PC-9 (cell line): ENCODE measurements at regions of chr14 and their contacts with region 1.

Region 1: DNA sequence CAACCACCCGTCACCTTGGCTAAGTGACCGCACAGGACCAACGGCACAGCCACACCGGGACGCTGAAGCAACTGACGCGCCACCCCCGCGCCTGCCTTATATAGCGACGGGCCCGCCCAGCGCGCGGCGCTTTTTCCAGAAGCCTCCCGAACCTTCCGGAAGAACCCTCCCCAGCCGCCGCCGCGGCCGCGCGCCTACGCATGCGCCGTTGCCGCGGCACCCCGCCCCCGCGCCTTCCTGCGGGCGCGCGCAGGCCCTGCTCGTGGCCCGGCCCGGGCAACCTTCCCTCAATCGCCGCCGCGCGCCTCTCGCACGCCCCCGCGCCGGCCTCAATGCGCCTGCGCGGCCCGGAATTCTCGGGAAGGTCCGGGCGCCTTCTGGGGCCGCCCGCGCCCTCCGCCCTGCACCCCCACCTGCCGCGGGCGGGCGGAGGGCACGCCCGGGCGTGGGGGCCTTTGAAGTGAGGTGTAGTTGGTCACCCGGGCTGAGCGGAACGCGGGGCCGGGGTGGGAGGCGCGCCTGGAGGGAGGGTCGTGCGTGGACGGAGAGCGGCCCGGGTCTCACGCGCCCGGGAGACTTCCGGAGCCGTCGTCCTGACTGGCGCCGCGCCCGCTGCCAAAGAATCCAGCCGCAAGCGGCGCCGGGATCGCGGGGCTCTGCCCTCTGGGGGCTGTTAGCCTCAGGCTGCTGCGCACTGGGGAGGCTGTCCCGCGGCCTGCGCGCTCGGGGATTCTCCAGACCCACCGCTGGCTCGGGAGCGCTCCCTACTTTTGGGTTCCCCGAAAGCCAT is at the start of gene HSP90AA1:
- DNase-seq: peak; percentile 88 to 100
- H3K4me3 ChIP-seq: peak within 1 kb of the TSS; percentile 89
- H3K27ac ChIP-seq: peak within 1 kb of the TSS; percentile 82
- H3K4me1 ChIP-seq: peaks cover 41% of the 10 kb centered on the region
- H3K27me3 ChIP-seq: no peaks in the 10 kb centered on the region
- CTCF ChIP-seq: peak; percentile 28; the same call in 1 of the 2 replicates
- total RNA-seq, gene HSP90AA1: 1,314 and 1,931 TPM in 2 replicates

Region 2: DNA sequence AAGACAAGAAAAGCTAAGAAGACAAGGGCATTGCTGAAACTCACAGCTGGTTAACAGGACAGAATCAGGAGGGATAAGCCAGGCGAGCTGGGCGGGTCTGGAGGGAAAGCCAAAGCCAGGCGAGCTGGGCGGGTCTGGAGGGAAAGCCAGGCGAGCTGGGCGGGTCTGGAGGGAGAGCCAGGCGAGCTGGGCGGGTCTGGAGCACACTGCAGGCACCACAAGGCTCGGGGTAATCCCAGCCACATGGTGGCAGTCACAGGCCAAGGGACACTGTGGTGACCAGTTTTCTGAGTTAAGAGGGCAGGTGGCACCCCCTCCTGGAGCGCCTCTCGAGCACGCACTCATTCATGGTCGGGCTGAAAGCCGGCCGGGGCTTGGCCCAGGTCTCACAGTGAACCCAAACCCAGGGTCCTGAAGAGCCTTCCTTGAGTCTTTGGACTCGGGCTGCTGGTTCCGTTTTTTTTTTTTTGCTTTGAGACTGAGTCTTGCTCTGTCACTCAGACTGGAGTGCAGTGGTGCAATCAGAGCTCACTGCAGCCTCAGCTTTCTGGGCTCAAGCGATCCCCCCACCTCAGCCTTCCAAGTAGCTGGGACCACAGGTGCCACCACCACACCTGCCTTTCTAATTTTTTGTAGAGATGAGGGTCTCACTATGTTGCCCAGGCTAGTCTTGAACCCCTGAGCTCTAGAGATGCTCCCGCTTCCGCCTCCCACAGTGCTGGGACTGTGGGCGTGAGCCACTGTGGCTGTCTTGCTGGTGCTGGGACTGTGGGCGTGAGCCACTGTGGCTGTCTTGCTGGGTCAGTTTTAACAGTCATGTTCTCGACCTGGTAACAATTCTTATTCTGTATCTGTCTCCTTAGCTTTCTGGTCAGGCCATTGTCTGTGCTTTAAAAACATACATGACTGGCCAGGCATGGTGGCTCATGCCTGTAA is 40.6 kb before region 1 on chr14:
- CTCF ChIA-PET with region 1: interaction called, 7 read pairs
- POLR2A ChIA-PET with region 1: interaction called, 6 read pairs
- intact Hi-C with region 1: loop called (anchors 1 kb)
- DNase-seq: peak; percentile 98 to 100
- H3K4me3 ChIP-seq: no peak overlapping the region
- H3K27ac ChIP-seq: no peak overlapping the region
- H3K4me1 ChIP-seq: peaks cover 3% of the 10 kb centered on the region
- H3K27me3 ChIP-seq: no peaks in the 10 kb centered on the region
- CTCF ChIP-seq: peak; percentile 84

Region 3: GRCh38 chr14:102063091-102063802 is 23.9 kb before region 1 on chr14:
- CTCF ChIA-PET with region 1: interaction called, 8 read pairs
- POLR2A ChIA-PET with region 1: interaction called, 6 read pairs
- intact Hi-C with region 1: loop called (anchors 1 kb)
- DNase-seq: peak; percentile 95 to 97
- H3K4me3 ChIP-seq: peak overlapping the region; percentile 48
- H3K27ac ChIP-seq: peak overlapping the region; percentile 57
- H3K4me1 ChIP-seq: peaks cover 23% of the 10 kb centered on the region
- H3K27me3 ChIP-seq: no peaks in the 10 kb centered on the region
- CTCF ChIP-seq: peak; percentile 88

Region 4: DNA sequence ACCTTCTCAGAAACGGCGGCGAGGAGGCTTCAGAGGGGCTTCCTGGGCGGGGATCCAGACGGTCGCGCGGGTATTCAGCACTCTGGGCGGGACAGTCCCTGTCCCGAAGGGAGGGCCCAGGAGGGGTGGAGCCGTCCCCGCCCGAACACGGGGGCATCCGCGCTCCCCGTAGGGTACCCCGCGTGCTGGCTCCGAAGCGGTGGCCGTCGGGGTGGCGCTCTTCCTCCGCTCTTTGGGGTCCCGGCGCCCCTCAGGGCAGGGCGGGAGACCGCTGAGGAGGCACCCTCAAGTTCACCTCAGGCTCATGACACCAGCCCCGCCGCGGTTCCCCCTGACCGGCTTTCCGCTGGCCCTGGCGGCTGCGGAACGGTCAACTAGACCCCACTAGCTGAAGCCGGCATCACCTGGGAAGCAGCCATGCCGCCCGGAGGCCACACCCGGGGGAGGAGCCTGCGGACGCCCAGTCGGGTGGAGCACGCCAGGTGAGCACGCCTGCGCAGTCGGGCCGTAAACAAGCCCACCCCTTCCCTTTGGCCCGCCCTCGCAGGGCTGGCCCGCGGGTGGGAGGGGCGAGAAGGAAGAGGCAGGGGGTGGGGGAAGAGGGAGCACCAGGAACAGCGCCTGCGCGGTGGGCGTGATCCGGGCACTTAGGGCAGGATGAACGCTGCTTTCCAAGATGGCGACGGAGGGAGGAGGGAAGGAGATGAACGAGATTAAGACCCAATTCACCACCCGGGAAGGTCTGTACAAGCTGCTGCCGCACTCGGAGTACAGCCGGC is 52.3 kb after region 1 on chr14 and contains the start of gene WDR20:
- CTCF ChIA-PET with region 1: interaction called, 10 read pairs
- POLR2A ChIA-PET with region 1: interaction called, 21 read pairs
- intact Hi-C with region 1: loop called (anchors 2 kb)
- DNase-seq: peak; percentile 98 to 100
- H3K4me3 ChIP-seq: peak within 1 kb of the TSS; percentile 75
- H3K27ac ChIP-seq: peak within 1 kb of the TSS; percentile 44
- H3K4me1 ChIP-seq: peaks cover 31% of the 10 kb centered on the region
- H3K27me3 ChIP-seq: no peaks in the 10 kb centered on the region
- CTCF ChIP-seq: peak; percentile 19; the same call in 1 of the 2 replicates
- total RNA-seq, gene WDR20: 62.2 and 93.5 TPM in 2 replicates